Activated T-helper 2 cell treated with anti-CD3 and anti-CD28 coated beads, Interferon-gamma antibody, Interleukin-2, Interleukin-4, amounts not matched to agents 10 μg/mL and 5 μg/mL and 100 μg/mL, durations not matched to agents 14 hours and 24 hours and 36 hours (primary cell): ENCODE measurements at regions of chr1 and their contacts with region 1.

Region 1: GRCh38 chr1:228486596-228487335 is 416 bp upstream of the RNF187 start:
- DNase-seq: peak; percentile 83
- H3K4me3 Mint-ChIP-seq: peak overlapping the region; percentile 97
- H3K27ac Mint-ChIP-seq: peak overlapping the region; percentile 100
- H3K4me1 Mint-ChIP-seq: peaks cover 35% of the 10 kb centered on the region
- H3K27me3 Mint-ChIP-seq: no peaks in the 10 kb centered on the region

Region 2: DNA sequence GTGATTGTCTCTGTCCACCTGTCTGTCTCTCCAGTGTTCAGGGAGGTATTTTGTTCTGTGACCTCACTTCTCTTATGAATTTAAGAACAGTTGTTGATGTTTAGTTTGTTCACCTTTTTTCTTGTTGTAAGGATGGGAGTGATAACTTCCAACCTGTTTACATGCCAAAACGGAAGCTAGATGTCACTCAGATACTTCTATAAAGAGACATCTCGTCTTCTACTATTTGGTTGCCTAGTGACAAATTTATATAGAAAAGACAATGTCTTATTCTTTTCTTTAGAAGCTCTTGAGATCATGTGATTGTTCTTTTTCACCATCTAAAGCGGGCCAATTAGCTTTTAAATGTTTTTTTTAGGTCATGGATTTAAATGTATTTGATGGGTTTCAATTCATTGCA is 637.5 kb before region 1 on chr1:
- intact Hi-C with region 1: no loop called
- DNase-seq: no peak
- H3K4me3 Mint-ChIP-seq: no peak overlapping the region
- H3K27ac Mint-ChIP-seq: no peak overlapping the region
- H3K4me1 Mint-ChIP-seq: no peaks in the 10 kb centered on the region
- H3K27me3 Mint-ChIP-seq: no peaks in the 10 kb centered on the region

Region 3: GRCh38 chr1:228416217-228416933 is 70.4 kb before region 1 on chr1 and contains the start of gene TRIM17:
- intact Hi-C with region 1: loop called (anchors 2 kb)
- DNase-seq: no peak
- H3K4me3 Mint-ChIP-seq: peak within 1 kb of the TSS; percentile 77
- H3K27ac Mint-ChIP-seq: peak within 1 kb of the TSS; percentile 56
- H3K4me1 Mint-ChIP-seq: peaks cover 16% of the 10 kb centered on the region
- H3K27me3 Mint-ChIP-seq: peaks cover 21% of the 10 kb centered on the region
- total RNA-seq, gene TRIM17: 2.3 and 2.7 TPM in 2 replicates

Region 4: DNA sequence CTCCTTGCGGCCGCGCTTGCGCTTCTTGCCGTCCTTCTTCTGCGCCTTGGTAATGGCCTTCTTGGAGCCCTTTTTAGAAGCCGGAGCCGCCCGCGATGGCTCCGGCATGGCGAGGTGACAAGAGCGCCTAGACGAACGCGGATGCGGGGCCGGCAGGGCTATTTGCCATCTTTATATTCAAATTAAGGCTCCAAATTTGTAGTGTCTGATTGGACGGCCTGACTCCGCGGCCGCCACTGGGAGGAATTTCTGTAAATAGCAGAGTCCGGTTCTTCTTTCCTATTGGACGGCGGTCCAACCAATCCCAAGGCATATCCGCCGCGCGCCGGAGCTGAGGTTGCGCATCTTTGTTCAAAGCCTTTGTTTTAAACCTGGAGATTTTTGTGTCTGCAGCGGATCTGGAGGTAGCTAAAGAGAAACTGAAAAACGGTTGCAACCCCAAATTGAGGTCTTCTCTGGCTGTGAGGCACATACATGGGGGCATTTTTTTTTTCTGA is 22.2 kb before region 1 on chr1:
- intact Hi-C with region 1: loop called (anchors 1 kb)
- DNase-seq: peak; percentile 93
- H3K4me3 Mint-ChIP-seq: peak overlapping the region; percentile 82
- H3K27ac Mint-ChIP-seq: peak overlapping the region; percentile 87
- H3K4me1 Mint-ChIP-seq: peaks cover 58% of the 10 kb centered on the region
- H3K27me3 Mint-ChIP-seq: peaks cover 3% of the 10 kb centered on the region

Region 5: GRCh38 chr1:228471762-228472398 is 14.9 kb before region 1 on chr1:
- intact Hi-C with region 1: loop called (anchors 1 kb)
- DNase-seq: no peak
- H3K4me3 Mint-ChIP-seq: no peak overlapping the region
- H3K27ac Mint-ChIP-seq: peak overlapping the region; percentile 70
- H3K4me1 Mint-ChIP-seq: peaks cover 30% of the 10 kb centered on the region
- H3K27me3 Mint-ChIP-seq: peaks cover 3% of the 10 kb centered on the region